SK-N-SH (cell line): ENCODE measurements at regions of chr4 and their contacts with region 1.

Region 1: DNA sequence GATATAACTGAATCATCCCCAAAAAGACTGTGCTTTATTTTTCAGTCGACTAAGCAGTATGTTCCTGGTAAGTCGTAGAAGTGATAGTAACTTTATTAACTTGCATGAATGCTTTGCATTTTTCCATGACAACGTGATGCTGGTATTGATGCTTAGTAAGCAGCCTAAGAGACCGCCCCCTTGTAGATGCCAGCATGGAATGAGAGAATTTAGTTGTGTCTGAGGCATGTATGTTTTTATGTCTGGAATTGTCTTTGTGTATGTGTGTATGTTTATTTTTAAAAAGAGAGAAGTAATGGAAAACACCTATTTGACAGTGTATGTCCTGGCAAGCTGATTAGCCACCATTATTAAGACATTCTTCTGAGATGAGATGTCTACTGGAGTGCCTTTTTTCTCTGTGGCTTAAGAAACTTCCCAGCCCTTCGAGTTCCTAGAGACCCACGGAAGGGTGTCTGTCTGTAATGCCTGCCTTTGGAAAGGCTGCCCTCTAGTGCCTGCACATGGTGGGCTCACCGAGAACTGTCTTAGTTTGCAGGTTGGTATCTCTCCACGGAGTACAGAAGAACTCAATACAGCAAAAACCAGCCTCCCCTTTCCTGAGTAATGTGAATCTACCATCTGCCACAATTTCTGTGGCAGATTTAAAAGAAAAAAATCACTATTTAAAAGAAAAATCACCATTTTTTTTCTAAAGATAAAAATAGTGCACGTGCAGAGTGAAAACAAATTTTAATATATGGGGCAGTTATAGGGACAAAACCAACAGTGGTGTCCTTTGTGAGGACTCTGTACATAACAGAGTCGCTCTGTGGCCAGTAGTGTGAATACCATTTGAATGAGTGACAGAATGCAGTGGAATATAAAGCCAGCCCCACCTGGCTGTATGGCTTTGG is 85.9 kb downstream of the AASDH start:
- DNase-seq: peak; percentile 75
- H3K4me3 ChIP-seq: peak overlapping the region in 1 of 2 experiments; percentile 33; a peak in 1 of 4 replicates
- H3K27ac ChIP-seq: peak overlapping the region; percentile 49 to 71; a peak in 3 of 4 replicates
- H3K4me1 ChIP-seq: no peaks in the 10 kb centered on the region; a peak in 2 of 4 replicates
- H3K27me3 ChIP-seq: no peaks in the 10 kb centered on the region
- CTCF ChIP-seq: peak; percentile 98
- EP300 ChIP-seq: no peak
- RAD21 ChIP-seq: peak; percentile 100

Region 2: DNA sequence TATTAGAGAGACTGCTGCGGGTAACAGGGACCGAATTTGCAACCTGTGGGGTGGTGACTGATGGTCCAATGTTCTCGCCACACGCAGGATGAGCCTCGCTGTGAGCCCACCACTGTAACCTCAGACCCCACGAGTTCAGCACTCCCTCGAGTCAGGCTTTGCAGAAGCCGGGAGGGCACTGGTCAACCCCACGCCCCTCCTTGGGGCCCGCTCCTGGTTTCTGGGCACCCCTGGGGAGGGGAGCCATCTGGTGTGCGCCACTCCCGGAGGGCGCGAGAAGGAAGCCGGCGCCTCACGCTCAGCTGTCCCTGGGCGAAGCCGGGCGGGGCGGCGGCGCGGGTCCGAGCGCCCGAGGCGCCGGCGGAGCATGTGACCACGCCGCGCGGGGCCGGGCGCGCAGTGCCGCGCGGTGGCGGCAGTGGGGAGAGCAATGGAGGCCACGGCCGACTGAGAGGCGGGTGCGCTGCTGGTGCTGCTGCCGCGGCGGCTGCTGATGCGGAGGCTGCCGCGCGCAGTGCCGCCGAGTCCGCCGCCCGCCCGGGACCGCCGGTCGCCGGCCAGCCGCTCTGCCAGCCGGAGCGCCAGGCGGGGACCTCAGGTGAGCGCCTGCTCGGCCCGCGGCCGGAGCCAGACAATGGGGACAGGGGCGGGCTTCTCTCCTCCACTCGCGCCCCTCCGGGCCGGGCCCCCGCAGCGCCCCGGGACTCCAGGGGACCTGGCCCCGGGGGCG is 252.6 kb before region 1 on chr4:
- CTCF ChIA-PET with region 1: interaction called, 14 read pairs
- POLR2A ChIA-PET with region 1: interaction called, 4 read pairs
- DNase-seq: peak; percentile 89
- H3K4me3 ChIP-seq: peak overlapping the region; percentile 89 to 94
- H3K27ac ChIP-seq: peak overlapping the region; percentile 58 to 95; a peak in 3 of 4 replicates
- H3K4me1 ChIP-seq: peaks cover 0 to 8% of the 10 kb centered on the region in 2 experiments; a peak in 3 of 4 replicates
- H3K27me3 ChIP-seq: no peaks in the 10 kb centered on the region
- CTCF ChIP-seq: peak; percentile 12; the same call in 1 of the 2 replicates
- EP300 ChIP-seq: peak; percentile 5 to 28; a peak in 2 of 4 replicates
- RAD21 ChIP-seq: peak; percentile 48

Region 3: GRCh38 chr4:56267558-56267957 is 33.9 kb before region 1 on chr4:
- CTCF ChIA-PET with region 1: no interaction called
- POLR2A ChIA-PET with region 1: no interaction called
- DNase-seq: no peak
- H3K4me3 ChIP-seq: no peak overlapping the region
- H3K27ac ChIP-seq: no peak overlapping the region
- H3K4me1 ChIP-seq: no peaks in the 10 kb centered on the region; a peak in 2 of 4 replicates
- H3K27me3 ChIP-seq: no peaks in the 10 kb centered on the region
- CTCF ChIP-seq: no peak
- EP300 ChIP-seq: no peak
- RAD21 ChIP-seq: no peak

Region 4: DNA sequence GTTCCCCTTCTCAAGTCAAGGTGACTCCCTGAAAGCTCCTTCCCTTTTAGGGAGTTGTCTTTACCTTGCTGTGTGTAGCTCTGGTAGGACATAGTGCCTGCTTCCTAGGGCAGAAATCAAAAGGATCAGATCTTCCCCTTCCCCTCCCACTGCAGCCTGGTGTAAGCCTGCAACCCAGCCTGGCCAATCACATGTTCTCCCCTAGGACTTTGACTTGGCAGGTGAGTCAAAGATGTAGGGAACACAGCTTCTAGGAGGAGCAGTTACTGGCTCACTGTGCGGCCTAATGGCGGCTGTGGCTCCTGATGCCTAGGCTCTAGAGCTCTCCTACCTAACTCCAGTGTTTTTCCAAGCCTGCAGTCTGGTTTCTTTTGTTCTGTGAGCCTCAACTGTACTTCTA is 18.1 kb before region 1 on chr4:
- CTCF ChIA-PET with region 1: interaction called, 14 read pairs
- POLR2A ChIA-PET with region 1: no interaction called
- DNase-seq: no peak
- H3K4me3 ChIP-seq: no peak overlapping the region
- H3K27ac ChIP-seq: no peak overlapping the region
- H3K4me1 ChIP-seq: peaks cover 0 to 7% of the 10 kb centered on the region in 2 experiments; a peak in 1 of 4 replicates
- H3K27me3 ChIP-seq: no peaks in the 10 kb centered on the region
- CTCF ChIP-seq: no peak
- EP300 ChIP-seq: no peak
- RAD21 ChIP-seq: no peak

Region 5: GRCh38 chr4:56318555-56318954 is 17.1 kb after region 1 on chr4:
- CTCF ChIA-PET with region 1: no interaction called
- POLR2A ChIA-PET with region 1: no interaction called
- DNase-seq: no peak
- H3K4me3 ChIP-seq: no peak overlapping the region
- H3K27ac ChIP-seq: no peak overlapping the region
- H3K4me1 ChIP-seq: no peaks in the 10 kb centered on the region; a peak in 1 of 4 replicates
- H3K27me3 ChIP-seq: no peaks in the 10 kb centered on the region
- CTCF ChIP-seq: no peak
- EP300 ChIP-seq: no peak
- RAD21 ChIP-seq: no peak